ENCODE measurements at regions of chr5 and their contacts with region 1.

Region 1: DNA sequence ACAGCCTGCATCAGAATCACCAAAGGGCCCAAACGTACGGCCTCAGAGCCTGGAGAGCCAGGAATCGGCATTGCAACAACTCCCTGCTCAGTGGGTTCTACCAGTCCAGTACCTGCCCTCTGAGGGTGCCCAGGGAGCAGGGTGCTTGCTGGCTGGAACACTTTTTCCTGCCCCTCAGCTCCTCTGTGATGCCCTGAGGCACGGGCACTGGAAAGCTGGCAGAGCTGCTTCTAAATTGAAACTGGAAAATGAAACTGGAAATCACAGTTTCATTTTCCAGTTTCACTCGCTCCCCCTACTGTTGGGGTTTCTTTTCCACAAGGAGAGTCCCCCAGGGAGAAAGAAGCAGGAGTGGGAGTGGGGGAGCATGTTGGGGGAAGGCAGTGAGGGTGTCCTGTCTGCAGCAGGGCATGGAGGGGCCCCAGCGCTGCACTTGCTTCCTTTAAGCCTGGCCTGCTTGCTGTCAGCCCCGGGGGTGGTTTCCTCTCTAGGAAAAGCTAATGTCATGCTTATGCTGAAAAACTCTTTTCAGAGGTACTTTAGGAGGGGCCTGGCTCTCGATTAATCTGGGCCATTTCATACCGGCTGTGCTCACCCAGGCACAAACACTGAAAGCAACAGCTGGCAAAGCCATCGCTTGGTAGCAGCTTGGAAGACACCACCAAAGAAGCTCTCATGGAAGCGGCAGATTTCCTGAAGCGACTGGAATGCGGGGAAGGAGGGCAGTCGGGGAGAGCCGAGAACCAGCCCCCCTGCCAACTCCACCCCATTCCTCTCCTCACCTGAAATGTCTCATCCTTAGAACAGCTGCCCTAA is 26.2 kb downstream of the IRF1 start:
- DNase-seq: no peak
- ATAC-seq: no peak

Region 2: DNA sequence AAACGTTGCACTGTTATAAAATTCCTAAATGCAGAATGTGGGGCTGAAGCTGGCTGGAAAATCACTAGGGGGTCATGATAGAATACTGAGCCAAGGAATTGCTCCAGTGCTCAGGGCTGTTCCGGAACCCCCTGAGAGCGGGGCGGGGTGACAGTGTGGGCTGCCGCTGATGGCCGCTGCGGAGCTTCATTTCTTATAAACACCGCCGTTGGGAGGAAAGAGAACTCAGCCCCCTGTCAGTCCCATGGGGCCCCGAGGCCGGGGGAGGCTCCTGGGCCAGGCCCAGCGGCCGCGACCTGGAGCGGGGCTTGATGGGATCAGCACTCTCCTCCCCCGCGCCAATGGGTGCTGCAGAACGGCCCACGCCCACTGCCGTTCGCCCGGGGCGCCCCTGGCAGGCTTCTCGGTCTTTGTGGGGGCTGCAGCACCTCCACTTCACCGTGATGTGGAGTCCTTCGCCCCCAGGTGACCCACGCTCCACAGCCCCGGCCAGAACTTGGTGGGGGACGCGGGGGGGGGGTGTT is 31.4 kb after region 1 on chr5:
- intact Hi-C with region 1: loop called (anchors 1 kb)
- DNase-seq: peak; percentile 94
- ATAC-seq: peak; percentile 73

Region 3: GRCh38 chr5:132556763-132557477 is 92.6 kb after region 1 on chr5 and contains the start of gene RAD50:
- intact Hi-C with region 1: no loop called
- DNase-seq: peak; percentile 98
- ATAC-seq: peak; percentile 99
- total RNA-seq, gene RAD50: 31.4 TPM

Measured in Right ventricle myocardium inferior (tissue), 1 donor.